HCT116 (cell line): ENCODE measurements at regions of chr12 and their contacts with region 1.

Region 1: GRCh38 chr12:21989819-21990412 is 48.7 kb upstream of the ABCC9 start:
- DNase-seq: peak; percentile 13
- ATAC-seq: peak; percentile 70
- H3K4me3 ChIP-seq: no peak overlapping the region
- H3K27ac ChIP-seq: no peak overlapping the region
- H3K4me1 ChIP-seq: no peaks in the 10 kb centered on the region
- H3K27me3 ChIP-seq: no peaks in the 10 kb centered on the region; the same call in 1 of the 2 replicates
- CTCF ChIP-seq: peak; percentile 41 to 64 (median 53); a peak in 5 of 6 replicates
- POLR2A ChIP-seq: no peak
- RAD21 ChIP-seq: peak; percentile 64

Region 2: GRCh38 chr12:21607701-21608100 is 382.2 kb before region 1 on chr12:
- CTCF ChIA-PET with region 1: no interaction called
- POLR2A ChIA-PET with region 1: no interaction called
- RAD21 ChIA-PET with region 1: no interaction called
- intact Hi-C with region 1: loop called (anchors 10 kb)
- DNase-seq: peak; percentile 12
- ATAC-seq: no peak
- H3K4me3 ChIP-seq: no peak overlapping the region
- H3K27ac ChIP-seq: no peak overlapping the region
- H3K4me1 ChIP-seq: no peaks in the 10 kb centered on the region
- H3K27me3 ChIP-seq: no peaks in the 10 kb centered on the region
- CTCF ChIP-seq: peak in 2 of 3 experiments; percentile 38 to 41; a peak in 3 of 6 replicates
- POLR2A ChIP-seq: no peak
- RAD21 ChIP-seq: peak; percentile 50; the same call in 1 of the 2 replicates

Region 3: DNA sequence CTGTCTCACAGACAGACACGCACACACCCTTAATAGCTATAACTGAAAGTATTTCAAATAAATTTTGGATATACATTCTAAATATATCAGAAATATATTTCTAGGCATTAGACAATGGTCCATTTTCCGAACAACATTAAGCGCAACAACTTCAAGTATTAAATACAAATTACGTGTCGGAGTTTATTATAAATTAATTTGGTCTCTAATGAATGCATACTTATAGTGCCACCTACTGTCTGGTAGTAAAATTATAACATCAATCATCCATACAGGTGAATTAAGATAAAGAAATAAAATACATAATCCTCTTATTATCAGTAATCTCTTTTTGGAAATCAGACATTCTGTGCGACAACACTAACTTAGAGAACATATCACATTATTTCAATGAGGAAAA is 28.9 kb after region 1 on chr12:
- CTCF ChIA-PET with region 1: interaction called, 12 read pairs
- POLR2A ChIA-PET with region 1: no interaction called
- RAD21 ChIA-PET with region 1: no interaction called
- intact Hi-C with region 1: no loop called
- DNase-seq: no peak
- ATAC-seq: no peak; the same call in 1 of the 2 replicates
- H3K4me3 ChIP-seq: no peak overlapping the region
- H3K27ac ChIP-seq: no peak overlapping the region
- H3K4me1 ChIP-seq: 0 out of 4 replicates have a peak, but pooled peaks cover 0 to 2% of the 10 kb centered on the region in 2 experiments
- H3K27me3 ChIP-seq: no peaks in the 10 kb centered on the region
- CTCF ChIP-seq: peak; percentile 27 to 59 (median 43); a peak in 4 of 6 replicates
- POLR2A ChIP-seq: no peak
- RAD21 ChIP-seq: peak; percentile 57

Region 4: DNA sequence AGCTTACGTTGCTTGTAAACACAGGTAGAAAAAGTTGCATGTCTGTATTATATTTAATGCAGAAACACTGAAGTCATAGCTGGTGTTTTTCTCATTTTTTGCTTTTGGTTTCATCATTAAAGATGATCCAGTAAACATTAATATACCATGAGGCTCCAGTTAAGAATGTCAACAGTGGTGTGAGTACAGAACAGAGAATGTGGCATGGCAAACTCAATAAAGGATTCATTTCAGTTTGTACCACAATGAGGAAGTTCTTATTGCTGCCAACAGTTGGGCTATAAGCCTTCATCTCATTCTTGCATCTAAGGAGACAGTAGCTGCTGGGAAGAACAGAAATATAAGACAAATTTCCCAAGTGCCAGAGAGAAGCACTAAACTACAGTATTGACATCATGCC is 416.7 kb after region 1 on chr12:
- CTCF ChIA-PET with region 1: no interaction called
- POLR2A ChIA-PET with region 1: no interaction called
- RAD21 ChIA-PET with region 1: no interaction called
- intact Hi-C with region 1: no loop called
- DNase-seq: no peak
- ATAC-seq: no peak
- H3K4me3 ChIP-seq: no peak overlapping the region
- H3K27ac ChIP-seq: no peak overlapping the region
- H3K4me1 ChIP-seq: no peaks in the 10 kb centered on the region
- H3K27me3 ChIP-seq: no peaks in the 10 kb centered on the region
- CTCF ChIP-seq: no peak
- POLR2A ChIP-seq: no peak
- RAD21 ChIP-seq: no peak